ENCODE measurements at regions of chr6 and their contacts with region 1.

Region 1: GRCh38 chr6:42402184-42402583 is 49.5 kb downstream of the TRERF1 start:
- DNase-seq: no peak
- ATAC-seq: peak; percentile 49 to 72
- H3K4me3 Mint-ChIP-seq: peak overlapping the region in 7 of 10 donors; percentile 7 to 78 (median 26)
- H3K27ac Mint-ChIP-seq: peak overlapping the region in 9 of 10 donors; percentile 29 to 93 (median 75)
- H3K4me1 Mint-ChIP-seq: peaks cover 46 to 91% (median 87%) of the 10 kb centered on the region in 4 donors
- H3K27me3 Mint-ChIP-seq: no peaks in the 10 kb centered on the region

Region 2: GRCh38 chr6:41536795-41537758 is 865.1 kb before region 1 on chr6:
- POLR2A ChIA-PET with region 1: no interaction called
- DNase-seq: no peak
- ATAC-seq: no peak
- H3K4me3 Mint-ChIP-seq: no peak overlapping the region
- H3K27ac Mint-ChIP-seq: no peak overlapping the region
- H3K4me1 Mint-ChIP-seq: peaks cover 6 to 38% (median 16%) of the 10 kb centered on the region in 4 donors
- H3K27me3 Mint-ChIP-seq: peaks cover 1 to 56% (median 19%) of the 10 kb centered on the region in 5 donors

Region 3: DNA sequence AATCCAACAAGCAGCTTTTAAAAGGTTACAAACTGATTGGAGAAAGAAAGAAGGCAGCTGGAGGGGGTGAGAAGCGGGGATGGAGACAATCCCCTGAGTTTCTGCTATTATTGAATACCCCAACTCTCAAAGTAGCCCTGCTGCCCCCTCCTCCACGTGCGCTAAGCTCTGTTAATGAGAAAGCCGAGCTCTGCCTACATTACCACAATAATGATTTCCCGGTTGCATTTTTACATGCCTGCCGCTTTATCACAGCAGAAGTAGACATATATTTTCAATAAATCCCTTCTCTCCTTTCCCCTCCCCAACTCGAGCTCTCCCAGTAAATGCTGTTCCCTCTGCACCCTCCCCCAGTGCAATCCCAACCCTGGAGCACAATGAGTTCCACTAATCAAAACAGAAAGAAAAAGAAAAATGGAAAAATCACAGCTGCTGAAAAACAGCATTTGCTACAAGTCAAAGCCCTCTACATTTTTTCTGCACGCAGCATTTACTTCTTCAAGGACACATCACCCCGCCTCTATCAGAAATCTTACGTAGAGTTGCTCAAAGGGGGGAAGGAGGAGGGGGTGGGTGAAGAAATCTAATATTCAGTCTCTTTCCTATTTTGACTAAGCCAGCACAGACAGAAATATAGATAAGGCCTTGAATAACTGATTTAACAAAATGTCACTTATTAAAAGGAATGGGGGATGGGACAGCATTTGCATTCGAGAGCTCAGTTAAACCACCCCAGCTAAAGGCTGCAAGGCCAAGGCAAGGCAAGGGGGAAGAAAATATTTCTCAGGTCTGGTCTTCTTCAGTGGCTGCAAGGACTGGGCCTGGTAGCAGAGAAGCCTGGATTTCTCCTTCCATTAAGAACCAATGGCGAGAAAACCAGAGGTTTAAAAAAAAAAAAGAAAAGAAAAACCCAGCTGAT is 38.9 kb after region 1 on chr6:
- POLR2A ChIA-PET with region 1: interaction called, 10 read pairs
- DNase-seq: no peak
- ATAC-seq: no peak
- H3K4me3 Mint-ChIP-seq: peak overlapping the region in 8 of 10 donors; percentile 23 to 59 (median 37)
- H3K27ac Mint-ChIP-seq: peak overlapping the region; percentile 4 to 92 (median 72)
- H3K4me1 Mint-ChIP-seq: peaks cover 40 to 82% (median 68%) of the 10 kb centered on the region in 4 donors
- H3K27me3 Mint-ChIP-seq: no peaks in the 10 kb centered on the region